Activated B cell treated with CpG ODN at 0.5 μM for 24 hours (primary cell): ENCODE measurements at regions of chr12 and their contacts with region 1.

Region 1: DNA sequence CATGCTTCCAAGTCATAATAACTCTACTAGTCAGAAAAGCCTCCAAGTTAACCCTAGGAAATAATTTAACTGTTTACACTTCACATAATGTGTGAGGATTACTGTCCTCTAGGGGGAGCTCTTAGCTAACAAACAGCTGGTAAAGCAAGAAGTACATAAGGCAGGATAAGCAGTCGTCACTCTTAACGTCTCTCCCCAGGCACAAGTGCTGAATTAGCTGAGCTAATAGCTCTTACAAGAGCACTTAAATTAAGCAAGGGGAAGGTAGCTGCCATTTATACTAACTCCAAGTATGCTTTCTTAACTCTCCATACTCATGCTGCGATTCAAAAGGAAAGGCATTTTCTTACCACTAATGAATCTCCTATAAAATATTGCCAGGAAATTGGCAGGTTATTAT is 79.3 kb upstream of the TSPAN11 start:
- DNase-seq: no peak
- ATAC-seq: no peak
- H3K4me3 Mint-ChIP-seq: no peak overlapping the region
- H3K27ac Mint-ChIP-seq: no peak overlapping the region
- H3K4me1 Mint-ChIP-seq: peaks cover 10% of the 10 kb centered on the region
- H3K27me3 Mint-ChIP-seq: no peaks in the 10 kb centered on the region
- CTCF ChIP-seq: peak; percentile 51

Region 2: GRCh38 chr12:29519585-29520182 is 1327.6 kb before region 1 on chr12:
- CTCF ChIA-PET with region 1: interaction called, 12 read pairs
- POLR2A ChIA-PET with region 1: no interaction called
- intact Hi-C with region 1: loop called (anchors 1 kb)
- DNase-seq: no peak
- ATAC-seq: no peak
- H3K4me3 Mint-ChIP-seq: no peak overlapping the region
- H3K27ac Mint-ChIP-seq: no peak overlapping the region
- H3K4me1 Mint-ChIP-seq: no peaks in the 10 kb centered on the region
- H3K27me3 Mint-ChIP-seq: peaks cover 11% of the 10 kb centered on the region
- CTCF ChIP-seq: peak; percentile 40

Region 3: GRCh38 chr12:30695199-30696103 is 151.8 kb before region 1 on chr12 and contains the start of gene IPO8:
- CTCF ChIA-PET with region 1: no interaction called
- POLR2A ChIA-PET with region 1: no interaction called
- intact Hi-C with region 1: loop called (anchors 2 kb)
- DNase-seq: peak; percentile 73
- ATAC-seq: peak; percentile 90
- H3K4me3 Mint-ChIP-seq: peak within 1 kb of the TSS; percentile 98
- H3K27ac Mint-ChIP-seq: peak within 1 kb of the TSS; percentile 91
- H3K4me1 Mint-ChIP-seq: peaks cover 38% of the 10 kb centered on the region
- H3K27me3 Mint-ChIP-seq: no peaks in the 10 kb centered on the region
- CTCF ChIP-seq: no peak
- total RNA-seq, gene IPO8: 52.0 and 55.4 TPM in 2 replicates

Region 4: GRCh38 chr12:30806989-30807694 is 40.1 kb before region 1 on chr12:
- CTCF ChIA-PET with region 1: no interaction called
- POLR2A ChIA-PET with region 1: no interaction called
- intact Hi-C with region 1: loop called (anchors 1 kb)
- DNase-seq: no peak
- ATAC-seq: no peak
- H3K4me3 Mint-ChIP-seq: no peak overlapping the region
- H3K27ac Mint-ChIP-seq: no peak overlapping the region
- H3K4me1 Mint-ChIP-seq: no peaks in the 10 kb centered on the region
- H3K27me3 Mint-ChIP-seq: peaks cover 10% of the 10 kb centered on the region
- CTCF ChIP-seq: peak; percentile 69

Region 5: GRCh38 chr12:31238764-31239387 is 391.6 kb after region 1 on chr12:
- CTCF ChIA-PET with region 1: interaction called, 39 read pairs
- POLR2A ChIA-PET with region 1: no interaction called
- intact Hi-C with region 1: loop called (anchors 1 kb)
- DNase-seq: peak; percentile 37
- ATAC-seq: peak; percentile 93
- H3K4me3 Mint-ChIP-seq: no peak overlapping the region
- H3K27ac Mint-ChIP-seq: no peak overlapping the region
- H3K4me1 Mint-ChIP-seq: peaks cover 10% of the 10 kb centered on the region
- H3K27me3 Mint-ChIP-seq: peaks cover 23% of the 10 kb centered on the region
- CTCF ChIP-seq: no peak

Region 6: GRCh38 chr12:31339831-31340622 is 492.8 kb after region 1 on chr12:
- CTCF ChIA-PET with region 1: no interaction called
- POLR2A ChIA-PET with region 1: no interaction called
- intact Hi-C with region 1: no loop called
- DNase-seq: no peak
- ATAC-seq: no peak
- H3K4me3 Mint-ChIP-seq: no peak overlapping the region
- H3K27ac Mint-ChIP-seq: no peak overlapping the region
- H3K4me1 Mint-ChIP-seq: no peaks in the 10 kb centered on the region
- H3K27me3 Mint-ChIP-seq: no peaks in the 10 kb centered on the region
- CTCF ChIP-seq: no peak

Region 7: GRCh38 chr12:32755654-32756475 is 1908.6 kb after region 1 on chr12 and contains the start of gene YARS2:
- CTCF ChIA-PET with region 1: no interaction called
- POLR2A ChIA-PET with region 1: no interaction called
- intact Hi-C with region 1: loop called (anchors 1 kb)
- DNase-seq: peak; percentile 75
- ATAC-seq: peak; percentile 87
- H3K4me3 Mint-ChIP-seq: peak within 1 kb of the TSS; percentile 95
- H3K27ac Mint-ChIP-seq: peak within 1 kb of the TSS; percentile 92
- H3K4me1 Mint-ChIP-seq: peaks cover 17% of the 10 kb centered on the region
- H3K27me3 Mint-ChIP-seq: no peaks in the 10 kb centered on the region
- CTCF ChIP-seq: no peak
- total RNA-seq, gene YARS2: 19.6 and 23.2 TPM in 2 replicates